ENCODE measurements at regions of chr14 and their contacts with region 1.

Region 1: DNA sequence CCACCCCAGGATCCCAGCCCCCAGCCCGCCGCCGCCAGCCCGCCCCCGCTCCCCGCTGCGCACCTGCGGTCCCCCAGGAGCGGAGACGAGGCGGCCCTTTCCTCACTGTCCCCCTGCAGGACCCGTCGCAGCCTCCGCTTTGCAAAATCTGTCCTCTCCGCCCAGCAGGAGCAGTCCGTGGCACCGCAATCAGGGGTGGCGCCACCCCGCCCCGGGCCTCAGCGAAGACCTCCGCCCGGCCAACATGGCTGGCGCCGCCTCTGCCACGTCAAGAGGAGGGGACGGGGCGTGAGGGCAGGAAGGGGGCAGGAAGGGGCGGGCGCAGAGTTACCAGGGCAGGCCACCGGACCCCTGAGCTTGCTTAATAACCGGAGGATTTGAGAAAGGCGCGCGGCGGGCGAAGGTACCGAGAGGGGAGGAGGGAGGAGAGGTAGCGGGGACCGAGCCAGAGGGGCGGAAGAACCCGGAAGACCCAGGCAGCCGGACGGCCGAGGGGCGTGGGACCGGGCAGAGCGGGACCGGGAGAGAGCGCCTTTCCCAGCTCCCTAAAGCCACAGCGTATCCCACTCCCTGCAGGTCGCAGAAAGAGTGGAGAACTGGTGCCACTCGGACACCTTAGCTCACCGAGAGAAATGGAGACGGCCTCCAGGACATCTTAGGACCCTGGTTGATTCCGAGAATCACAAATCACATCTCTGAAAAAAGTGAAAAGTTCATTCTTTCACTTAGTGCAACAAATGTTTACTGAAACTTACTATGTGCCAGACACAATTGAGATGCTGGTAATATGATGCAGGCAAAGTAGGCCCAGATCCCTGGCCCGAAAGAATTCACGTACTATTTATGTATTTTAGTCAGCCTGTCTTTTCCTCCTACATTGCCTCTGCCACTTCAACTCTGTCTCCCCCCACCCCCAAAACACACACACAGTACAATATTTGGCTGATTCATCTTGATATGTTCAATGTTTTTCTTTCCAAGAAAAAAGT is at the start of gene SEC23A:
- DNase-seq: peak; percentile 75 to 77 (median 76)
- ATAC-seq: peak; percentile 94
- H3K4me3 ChIP-seq: peak within 1 kb of the TSS; percentile 88
- H3K27ac ChIP-seq: peak within 1 kb of the TSS; percentile 80
- H3K4me1 ChIP-seq: peaks cover 0 to 8% of the 10 kb centered on the region in 2 experiments; a peak in 2 of 5 replicates
- H3K27me3 ChIP-seq: no peaks in the 10 kb centered on the region
- CTCF ChIP-seq: no peak
- EP300 ChIP-seq: no peak
- POLR2A ChIP-seq: peak; percentile 81
- RAD21 ChIP-seq: no peak
- polyA plus RNA-seq, gene SEC23A: 5.5 to 6.4 TPM

Region 2: GRCh38 chr14:39169541-39169900 is 66.3 kb after region 1 on chr14:
- CTCF ChIA-PET with region 1: interaction called, 3 read pairs
- POLR2A ChIA-PET with region 1: interaction called, 11 read pairs
- in situ Hi-C with region 1: no loop called
- intact Hi-C with region 1: no loop called
- DNase-seq: no peak
- ATAC-seq: peak; percentile 23
- H3K4me3 ChIP-seq: peak overlapping the region; percentile 96
- H3K27ac ChIP-seq: peak overlapping the region; percentile 95
- H3K4me1 ChIP-seq: peaks cover 9 to 18% of the 10 kb centered on the region in 2 experiments; a peak in 4 of 5 replicates
- H3K27me3 ChIP-seq: no peaks in the 10 kb centered on the region
- CTCF ChIP-seq: no peak
- EP300 ChIP-seq: no peak
- POLR2A ChIP-seq: no peak
- RAD21 ChIP-seq: no peak

Region 3: GRCh38 chr14:39230416-39231035 is 127.3 kb after region 1 on chr14:
- CTCF ChIA-PET with region 1: no interaction called
- POLR2A ChIA-PET with region 1: no interaction called
- in situ Hi-C with region 1: no loop called
- intact Hi-C with region 1: loop called (anchors 2 kb)
- DNase-seq: peak in 1 of 4 experiments; percentile 19
- ATAC-seq: no peak
- H3K4me3 ChIP-seq: no peak overlapping the region
- H3K27ac ChIP-seq: no peak overlapping the region
- H3K4me1 ChIP-seq: peaks cover 0 to 20% of the 10 kb centered on the region in 2 experiments; a peak in 3 of 5 replicates
- H3K27me3 ChIP-seq: no peaks in the 10 kb centered on the region
- CTCF ChIP-seq: no peak
- EP300 ChIP-seq: no peak
- POLR2A ChIP-seq: no peak
- RAD21 ChIP-seq: no peak

Region 4: DNA sequence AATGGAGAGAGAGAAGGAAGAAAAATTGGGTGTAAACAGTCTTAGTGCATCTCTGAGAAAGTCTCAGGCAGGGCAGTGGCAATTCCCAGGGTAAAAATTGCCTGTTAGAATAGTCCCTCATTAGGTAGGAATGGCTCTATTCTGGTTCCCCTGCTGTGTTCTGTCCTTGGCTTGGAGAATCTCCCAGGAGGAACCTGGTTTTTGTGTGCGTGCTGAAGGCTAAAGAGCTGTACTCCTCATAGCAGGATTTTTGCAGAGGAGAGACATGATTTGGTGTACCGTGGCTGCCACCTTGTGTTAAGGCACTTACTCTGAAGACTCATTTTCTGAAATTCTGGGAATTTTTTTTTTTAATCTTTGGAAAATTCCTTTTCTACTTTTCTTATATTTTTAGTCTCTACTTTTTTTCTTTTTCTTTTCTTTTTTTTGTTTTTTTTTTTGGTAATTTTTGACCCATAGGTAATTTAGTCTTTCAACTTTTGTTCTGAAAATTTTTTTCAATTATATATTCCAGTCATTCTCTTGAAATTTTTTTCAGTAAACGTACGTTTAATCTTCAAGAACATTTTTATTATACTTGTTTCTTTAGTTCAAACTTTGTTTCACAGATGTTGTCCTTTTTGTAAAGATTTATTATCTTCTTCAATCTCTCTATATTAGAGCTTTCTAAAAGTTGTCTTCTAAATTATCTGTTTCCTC is 265.1 kb after region 1 on chr14:
- CTCF ChIA-PET with region 1: interaction called, 11 read pairs
- POLR2A ChIA-PET with region 1: no interaction called
- in situ Hi-C with region 1: no loop called
- intact Hi-C with region 1: loop called (anchors 5 kb)
- DNase-seq: peak in 3 of 4 experiments; percentile 9 to 54 (median 16)
- ATAC-seq: peak; percentile 84
- H3K4me3 ChIP-seq: no peak overlapping the region
- H3K27ac ChIP-seq: no peak overlapping the region
- H3K4me1 ChIP-seq: no peaks in the 10 kb centered on the region; a peak in 1 of 5 replicates
- H3K27me3 ChIP-seq: no peaks in the 10 kb centered on the region
- CTCF ChIP-seq: peak; percentile 47 to 70 (median 52)
- EP300 ChIP-seq: no peak
- POLR2A ChIP-seq: no peak
- RAD21 ChIP-seq: peak; percentile 34 to 63

Region 5: GRCh38 chr14:39426605-39427004 is 323.3 kb after region 1 on chr14:
- CTCF ChIA-PET with region 1: no interaction called
- POLR2A ChIA-PET with region 1: no interaction called
- in situ Hi-C with region 1: loop called (anchors 10 kb)
- intact Hi-C with region 1: loop called (anchors 2 kb)
- DNase-seq: no peak
- ATAC-seq: no peak
- H3K4me3 ChIP-seq: no peak overlapping the region
- H3K27ac ChIP-seq: no peak overlapping the region
- H3K4me1 ChIP-seq: peaks cover 2 to 5% of the 10 kb centered on the region in 2 experiments; a peak in 4 of 5 replicates
- H3K27me3 ChIP-seq: no peaks in the 10 kb centered on the region
- CTCF ChIP-seq: peak in 1 of 3 experiments; percentile 27; a peak in 2 of 6 replicates
- EP300 ChIP-seq: no peak
- POLR2A ChIP-seq: no peak
- RAD21 ChIP-seq: peak in 1 of 2 experiments; percentile 49; a peak in 2 of 4 replicates